ENCODE measurements at regions of chr22 and their contacts with region 1.

Region 1: GRCh38 chr22:41301105-41302020 is at the start of gene ZC3H7B:
- DNase-seq: peak; percentile 78 to 82
- ATAC-seq: peak; percentile 93 to 98 (median 97)
- H3K4me3 ChIP-seq: peak within 1 kb of the TSS; percentile 77 to 100 (median 86)
- H3K27ac ChIP-seq: peak within 1 kb of the TSS; percentile 46 to 96 (median 88)
- H3K4me1 ChIP-seq: peaks cover 0 to 31% (median 20%) of the 10 kb centered on the region in 9 donors
- H3K27me3 ChIP-seq: no peaks in the 10 kb centered on the region
- CTCF ChIP-seq: peak; percentile 38 to 82 (median 65)
- total RNA-seq, gene ZC3H7B: 31.7 to 51.5 (median 36.7) TPM

Region 2: GRCh38 chr22:40808018-40808841 is 493.1 kb before region 1 on chr22:
- intact Hi-C with region 1: no loop called
- DNase-seq: no peak
- ATAC-seq: no peak
- H3K4me3 ChIP-seq: no peak overlapping the region
- H3K27ac ChIP-seq: no peak overlapping the region
- H3K4me1 ChIP-seq: peaks cover 0 to 13% (median 0%) of the 10 kb centered on the region in 9 donors
- H3K27me3 ChIP-seq: no peaks in the 10 kb centered on the region
- CTCF ChIP-seq: no peak

Region 3: GRCh38 chr22:41237707-41238569 is 63.4 kb before region 1 on chr22:
- intact Hi-C with region 1: loop called in 1 of 10 experiments (anchors 10 kb)
- DNase-seq: peak; percentile 64 to 77
- ATAC-seq: peak; percentile 35 to 87 (median 74)
- H3K4me3 ChIP-seq: peak overlapping the region in 9 of 10 donors; percentile 28 to 55 (median 50)
- H3K27ac ChIP-seq: peak overlapping the region in 9 of 10 donors; percentile 46 to 76 (median 64)
- H3K4me1 ChIP-seq: peaks cover 8 to 37% (median 20%) of the 10 kb centered on the region in 9 donors
- H3K27me3 ChIP-seq: no peaks in the 10 kb centered on the region
- CTCF ChIP-seq: peak in 8 of 9 donors; percentile 35 to 77 (median 67)

Region 4: DNA sequence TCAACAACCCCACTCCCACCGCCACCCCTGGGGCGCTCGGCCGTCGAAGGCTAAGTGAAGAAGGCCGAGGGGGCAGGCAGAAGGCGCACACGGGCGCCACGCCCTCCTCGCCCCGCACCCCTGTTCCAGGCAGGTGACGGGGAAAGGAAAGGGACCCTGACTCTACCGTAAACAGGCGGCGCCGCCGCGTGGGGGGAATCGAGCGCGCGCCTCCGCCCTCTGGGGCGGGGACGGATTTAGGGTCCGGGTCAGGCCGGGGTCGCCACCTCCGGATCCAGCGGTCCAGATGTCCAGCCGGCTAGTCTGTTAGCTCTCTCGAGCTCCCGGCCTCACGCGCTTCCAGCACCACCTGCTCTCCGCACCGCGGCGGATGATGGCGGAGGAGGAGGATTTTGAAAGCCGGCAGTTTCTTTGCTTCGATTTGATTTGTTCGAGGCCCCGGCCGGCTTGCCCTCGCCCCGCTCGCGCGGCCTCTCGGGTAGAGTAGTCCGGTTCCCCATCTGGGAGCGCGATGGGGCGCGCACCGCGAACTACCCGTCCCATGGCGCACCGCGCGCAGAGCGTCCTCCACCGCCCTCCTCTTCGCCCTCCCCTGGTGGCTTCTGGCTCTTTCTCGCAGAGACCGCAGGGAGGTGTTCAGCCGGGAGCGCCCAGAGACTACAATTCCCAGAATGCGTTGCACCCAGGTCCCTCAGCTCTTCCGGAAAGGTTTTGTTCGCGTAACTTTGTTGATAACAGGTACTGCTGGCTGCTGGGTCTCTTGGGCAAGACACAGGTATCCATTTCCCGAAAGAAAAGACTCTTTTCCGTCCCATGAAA is 15.3 kb before region 1 on chr22 and contains the start of gene RANGAP1:
- intact Hi-C with region 1: loop called in 1 of 10 experiments (anchors 1 kb)
- DNase-seq: peak; percentile 98
- ATAC-seq: peak; percentile 99 to 100 (median 100)
- H3K4me3 ChIP-seq: peak within 1 kb of the TSS; percentile 69 to 98 (median 90)
- H3K27ac ChIP-seq: peak within 1 kb of the TSS; percentile 13 to 94 (median 83)
- H3K4me1 ChIP-seq: peaks cover 0 to 31% (median 25%) of the 10 kb centered on the region in 9 donors
- H3K27me3 ChIP-seq: no peaks in the 10 kb centered on the region
- CTCF ChIP-seq: peak in 7 of 9 donors; percentile 4 to 54 (median 36)
- total RNA-seq, gene RANGAP1: 26.5 to 53.8 (median 31.4) TPM

Region 5: GRCh38 chr22:41352051-41352450 is 50.7 kb after region 1 on chr22:
- intact Hi-C with region 1: loop called in 1 of 10 experiments (anchors 10 kb)
- DNase-seq: no peak
- ATAC-seq: no peak
- H3K4me3 ChIP-seq: no peak overlapping the region
- H3K27ac ChIP-seq: peak overlapping the region in 1 of 10 donors; percentile 21
- H3K4me1 ChIP-seq: peaks cover 0 to 13% (median 5%) of the 10 kb centered on the region in 9 donors
- H3K27me3 ChIP-seq: no peaks in the 10 kb centered on the region
- CTCF ChIP-seq: no peak

Region 6: DNA sequence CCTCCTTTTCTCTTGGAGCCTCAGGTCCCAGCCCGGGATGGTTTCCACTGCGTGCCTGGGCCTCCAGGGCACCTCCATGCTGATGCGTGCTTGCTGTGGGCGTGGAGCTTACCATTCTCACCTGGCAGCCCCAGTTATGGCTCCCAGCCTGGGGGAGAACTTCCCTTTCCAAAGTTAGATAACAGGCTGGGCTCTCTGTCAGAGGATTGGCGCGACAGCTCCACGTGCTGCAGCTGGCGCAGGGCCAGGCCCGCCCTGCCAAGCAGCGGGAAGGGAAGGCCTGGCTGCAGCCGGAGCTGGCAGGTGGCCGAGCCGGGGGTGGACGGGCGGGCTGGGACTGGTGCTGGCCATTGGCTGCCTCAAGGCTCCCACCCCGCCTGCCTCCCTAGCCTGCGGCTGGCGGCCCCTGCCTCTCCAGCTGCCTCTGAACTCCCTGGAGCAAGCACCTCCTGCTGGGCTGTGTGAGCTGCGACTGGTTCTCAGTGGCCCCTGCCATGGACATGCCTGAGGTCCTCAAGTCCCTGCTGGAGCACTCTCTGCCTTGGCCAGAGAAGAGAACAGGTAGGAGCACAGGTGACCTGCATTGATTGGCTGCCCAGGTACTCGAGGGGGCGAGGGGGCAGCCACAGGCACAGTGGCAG is 65.8 kb after region 1 on chr22:
- intact Hi-C with region 1: loop called in 3 of 10 experiments (anchors 5 kb)
- DNase-seq: peak; percentile 97 to 98
- ATAC-seq: peak; percentile 96 to 97 (median 97)
- H3K4me3 ChIP-seq: peak overlapping the region; percentile 0 to 66 (median 47)
- H3K27ac ChIP-seq: peak overlapping the region in 8 of 10 donors; percentile 10 to 87 (median 74)
- H3K4me1 ChIP-seq: peaks cover 15 to 41% (median 27%) of the 10 kb centered on the region in 9 donors
- H3K27me3 ChIP-seq: no peaks in the 10 kb centered on the region
- CTCF ChIP-seq: peak in 7 of 9 donors; percentile 31 to 61 (median 50)

Region 7: DNA sequence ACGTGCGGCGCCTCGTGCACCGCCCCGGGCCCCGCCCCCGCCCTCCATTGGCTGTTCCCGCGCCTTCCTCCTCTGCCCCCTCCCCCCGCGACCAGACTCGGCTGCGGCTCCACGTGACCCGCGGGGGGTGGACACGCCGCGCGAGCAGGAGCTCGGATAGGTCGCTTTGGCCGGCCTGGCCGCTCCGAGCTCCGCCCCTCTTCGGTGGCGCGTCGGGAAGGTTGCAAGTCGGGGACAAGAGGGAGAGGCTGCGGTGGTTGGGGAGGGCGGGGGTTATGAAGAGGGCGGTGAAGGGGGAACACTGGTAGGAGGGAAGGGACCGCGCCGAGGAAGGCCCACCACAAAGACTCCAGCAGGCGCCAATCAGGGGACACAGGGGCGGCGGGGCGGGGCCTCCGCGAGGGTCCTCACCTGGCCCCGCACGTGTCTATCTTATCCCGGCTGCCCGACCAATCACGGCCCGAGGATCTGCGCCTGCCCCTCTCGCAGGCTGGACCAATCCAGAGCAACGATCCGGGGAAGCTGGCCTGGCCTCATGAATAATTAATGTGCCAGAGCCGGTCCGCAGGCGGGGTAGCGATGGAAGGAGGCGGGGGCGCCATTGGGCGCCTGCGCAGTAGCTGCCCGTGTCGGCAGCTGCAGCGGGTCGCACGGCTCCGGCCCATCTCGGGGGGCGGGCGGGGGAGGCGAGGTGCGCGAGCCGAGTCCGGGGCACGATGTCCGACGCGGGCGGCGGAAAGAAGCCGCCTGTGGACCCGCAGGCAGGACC is 80.2 kb after region 1 on chr22 and contains the start of gene TEF:
- intact Hi-C with region 1: loop called in 1 of 10 experiments (anchors 5 kb)
- DNase-seq: peak; percentile 98 to 99
- ATAC-seq: peak; percentile 89 to 93 (median 91)
- H3K4me3 ChIP-seq: peak within 1 kb of the TSS; percentile 61 to 93 (median 82)
- H3K27ac ChIP-seq: peak within 1 kb of the TSS; percentile 94 to 99 (median 96)
- H3K4me1 ChIP-seq: peaks cover 9 to 43% (median 24%) of the 10 kb centered on the region in 9 donors
- H3K27me3 ChIP-seq: no peaks in the 10 kb centered on the region
- CTCF ChIP-seq: no peak
- total RNA-seq, gene TEF: 8.6 to 29.1 (median 18.4) TPM

Region 8: GRCh38 chr22:41543854-41544670 is 242.7 kb after region 1 on chr22 and contains the start of gene POLR3H:
- intact Hi-C with region 1: loop called in 1 of 10 experiments (anchors 10 kb)
- DNase-seq: peak; percentile 98 to 99
- ATAC-seq: peak; percentile 98 to 100 (median 99)
- H3K4me3 ChIP-seq: peak within 1 kb of the TSS; percentile 63 to 94 (median 80)
- H3K27ac ChIP-seq: peak within 1 kb of the TSS; percentile 52 to 91 (median 84)
- H3K4me1 ChIP-seq: peaks cover 3 to 40% (median 24%) of the 10 kb centered on the region in 9 donors
- H3K27me3 ChIP-seq: no peaks in the 10 kb centered on the region
- CTCF ChIP-seq: peak; percentile 24 to 81 (median 63)
- total RNA-seq, gene POLR3H: 13.3 to 25.8 (median 16.9) TPM

Measured in heart right ventricle (tissue), 16 donors.